Endothelial cell of umbilical vein (primary cell): ENCODE measurements at regions of chr2 and their contacts with region 1.

Region 1: DNA sequence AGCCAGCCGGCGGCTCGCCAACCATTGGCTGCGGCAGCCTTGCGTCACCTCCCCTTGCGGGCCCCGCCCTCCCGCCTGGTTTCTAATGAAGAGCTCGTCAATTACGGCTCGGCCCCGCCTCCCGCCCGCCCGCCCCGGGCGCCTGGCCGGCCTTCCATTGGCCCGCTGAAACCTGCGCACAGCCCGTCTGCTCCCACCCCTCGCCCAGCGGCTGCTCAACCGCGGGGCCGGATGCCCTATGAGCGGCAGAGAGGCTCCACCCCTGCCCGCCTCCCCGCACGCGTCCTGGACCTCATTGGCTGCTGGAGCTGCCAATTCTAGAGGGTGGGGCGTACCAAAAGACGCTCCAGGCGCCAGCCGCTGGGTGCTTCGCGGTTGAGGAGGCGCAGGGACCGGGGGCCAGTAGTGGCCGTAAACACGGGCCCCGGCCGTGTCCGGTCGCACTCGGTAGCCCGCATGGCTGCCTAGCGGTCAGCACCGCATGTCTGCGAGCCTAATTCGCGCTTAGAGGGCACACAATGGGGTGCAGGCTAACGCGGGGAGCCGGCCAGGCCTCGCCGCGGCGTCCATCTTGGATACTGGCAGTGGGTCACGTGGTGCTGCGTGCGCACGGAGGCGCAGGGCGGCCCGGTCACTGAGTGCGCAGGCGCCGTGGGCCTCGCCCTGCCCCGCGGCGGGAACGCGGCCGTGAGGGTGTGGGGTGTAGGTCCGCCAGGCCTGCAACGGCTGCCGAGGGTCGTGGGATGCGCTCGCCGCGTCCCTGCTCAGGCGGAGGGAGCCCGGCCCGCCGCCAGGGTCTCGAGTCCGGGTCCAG is 454 bp upstream of the HDAC4 start:
- DNase-seq: peak; percentile 99
- H3K4me3 ChIP-seq: peak overlapping the region; percentile 67 to 75 (median 71)
- H3K27ac ChIP-seq: peak overlapping the region; percentile 100
- H3K4me1 ChIP-seq: peaks cover 14% of the 10 kb centered on the region
- H3K27me3 ChIP-seq: no peaks in the 10 kb centered on the region
- CTCF ChIP-seq: no peak
- POLR2A ChIP-seq: peak; percentile 97

Region 2: DNA sequence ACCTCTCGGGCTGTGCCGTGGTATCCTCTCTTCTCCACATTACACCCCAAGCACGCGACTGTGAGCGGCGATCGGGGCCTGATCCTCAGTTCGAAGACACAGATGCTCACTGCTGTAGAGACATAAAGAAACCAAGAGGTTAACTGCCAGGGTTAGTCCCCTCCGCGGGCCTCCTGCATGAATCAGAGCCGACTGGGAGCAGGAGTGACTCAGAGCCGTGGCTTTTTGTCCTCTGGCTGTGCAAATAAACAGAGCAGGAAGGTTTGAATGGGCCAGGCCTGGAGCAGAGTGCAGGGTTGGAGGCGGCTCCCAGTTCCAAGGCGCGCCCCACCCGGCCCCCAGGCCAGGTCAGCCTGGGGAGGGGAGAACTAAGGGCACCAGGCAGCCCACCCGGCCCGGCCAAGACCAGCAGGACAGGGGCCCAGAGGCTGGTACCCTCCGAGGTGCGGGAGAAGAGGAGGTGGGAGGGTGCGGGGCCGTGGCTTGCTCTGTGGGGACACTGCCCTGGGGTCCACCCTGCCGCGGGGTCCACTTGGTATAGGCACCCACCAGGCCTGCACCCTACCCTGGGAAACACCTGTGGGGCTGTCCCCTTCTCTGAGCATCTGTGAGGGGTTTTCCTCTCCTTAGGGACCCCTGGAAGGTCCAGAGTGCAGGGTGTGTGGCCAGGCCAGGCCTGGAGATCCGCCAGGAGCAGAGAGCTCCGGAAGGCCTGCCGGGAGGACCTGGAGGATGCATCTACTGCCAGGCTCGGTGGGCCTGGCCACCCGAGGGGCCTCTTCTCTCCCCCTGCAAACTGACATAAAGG is 536.9 kb before region 1 on chr2:
- CTCF ChIA-PET with region 1: no interaction called
- POLR2A ChIA-PET with region 1: no interaction called
- dilution Hi-C with region 1: no loop called
- intact Hi-C with region 1: loop called (anchors 5 kb)
- DNase-seq: peak; percentile 96
- H3K4me3 ChIP-seq: no peak overlapping the region
- H3K27ac ChIP-seq: peak overlapping the region; percentile 92
- H3K4me1 ChIP-seq: peaks cover 19% of the 10 kb centered on the region
- H3K27me3 ChIP-seq: no peaks in the 10 kb centered on the region
- CTCF ChIP-seq: no peak
- POLR2A ChIP-seq: peak; percentile 49

Region 3: DNA sequence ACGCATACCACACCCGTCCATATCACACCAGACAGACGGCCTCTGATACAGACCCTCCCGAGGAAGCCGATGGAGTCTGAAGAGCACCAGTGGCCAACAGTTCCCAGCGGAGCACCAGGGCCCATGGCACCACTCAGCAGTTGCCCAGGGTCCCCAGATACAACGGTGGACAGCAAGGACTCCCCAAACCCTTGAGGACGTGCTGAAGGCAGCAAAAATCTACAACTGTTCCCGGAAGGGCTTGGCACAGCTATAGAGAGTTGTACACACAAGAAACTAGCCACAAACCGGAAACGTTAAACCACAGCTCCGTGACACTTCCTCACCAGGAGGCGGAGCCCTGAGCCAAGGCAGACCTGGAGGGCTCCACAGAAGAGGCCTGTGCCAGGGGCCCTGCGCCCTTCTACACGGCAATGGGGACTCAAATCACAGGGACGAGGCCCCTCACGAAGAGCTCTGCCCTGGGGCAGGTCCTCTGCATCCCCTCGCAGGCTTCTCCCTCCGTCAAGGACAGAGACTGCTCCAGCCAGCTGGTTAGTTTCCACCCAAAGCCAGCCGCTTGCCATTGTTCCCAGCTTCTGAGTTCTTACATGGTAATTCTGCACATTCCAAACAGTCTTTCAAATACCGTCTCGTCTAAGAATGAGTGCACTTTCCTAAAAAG is 133.9 kb before region 1 on chr2:
- CTCF ChIA-PET with region 1: interaction called, 5 read pairs
- POLR2A ChIA-PET with region 1: interaction called, 4 read pairs
- dilution Hi-C with region 1: no loop called
- intact Hi-C with region 1: loop called (anchors 5 kb)
- DNase-seq: peak; percentile 37
- H3K4me3 ChIP-seq: no peak overlapping the region
- H3K27ac ChIP-seq: no peak overlapping the region
- H3K4me1 ChIP-seq: peaks cover 14% of the 10 kb centered on the region
- H3K27me3 ChIP-seq: no peaks in the 10 kb centered on the region
- CTCF ChIP-seq: peak; percentile 6 to 29
- POLR2A ChIP-seq: no peak

Region 4: GRCh38 chr2:239380831-239381708 is 20.2 kb before region 1 on chr2:
- CTCF ChIA-PET with region 1: interaction called, 14 read pairs
- POLR2A ChIA-PET with region 1: interaction called, 4 read pairs
- dilution Hi-C with region 1: no loop called
- intact Hi-C with region 1: loop called (anchors 1 kb)
- DNase-seq: peak; percentile 80
- H3K4me3 ChIP-seq: peak overlapping the region in 2 of 3 experiments; percentile 27 to 31
- H3K27ac ChIP-seq: peak overlapping the region; percentile 19
- H3K4me1 ChIP-seq: peaks cover 15% of the 10 kb centered on the region
- H3K27me3 ChIP-seq: no peaks in the 10 kb centered on the region
- CTCF ChIP-seq: no peak
- POLR2A ChIP-seq: no peak

Region 5: DNA sequence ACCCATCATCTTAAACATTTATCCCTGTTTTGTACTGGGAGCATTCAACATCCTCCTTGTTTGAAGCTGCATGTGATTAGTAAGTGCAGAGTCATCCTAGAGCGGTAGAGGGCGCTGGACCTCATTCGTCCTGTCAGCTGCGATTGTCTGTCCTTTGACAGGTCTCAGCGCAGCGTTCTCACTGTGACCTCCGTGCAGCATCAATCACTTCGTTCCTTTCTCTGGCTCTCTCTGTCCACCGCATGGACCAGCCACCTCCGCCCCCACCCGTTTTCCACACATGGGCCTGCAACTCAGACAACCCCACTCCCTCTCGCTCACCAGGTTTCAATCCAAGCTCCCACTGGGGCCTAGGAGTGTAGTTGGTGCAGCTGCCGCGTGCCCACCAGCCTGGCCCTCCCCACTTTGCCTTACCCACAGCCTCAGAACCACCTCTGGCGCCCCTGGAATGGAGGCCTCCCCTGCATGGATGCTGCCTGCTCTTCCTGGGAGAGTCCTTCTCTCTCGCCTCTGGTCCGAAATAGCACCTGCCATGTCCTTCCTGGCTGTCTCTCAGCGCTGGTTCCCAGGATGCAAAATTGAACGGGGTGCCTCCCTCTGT is 533.4 kb after region 1 on chr2:
- CTCF ChIA-PET with region 1: interaction called, 4 read pairs
- POLR2A ChIA-PET with region 1: no interaction called
- dilution Hi-C with region 1: no loop called
- intact Hi-C with region 1: loop called (anchors 5 kb)
- DNase-seq: peak; percentile 40
- H3K4me3 ChIP-seq: no peak overlapping the region
- H3K27ac ChIP-seq: no peak overlapping the region
- H3K4me1 ChIP-seq: no peaks in the 10 kb centered on the region
- H3K27me3 ChIP-seq: no peaks in the 10 kb centered on the region
- CTCF ChIP-seq: peak; percentile 60 to 70
- POLR2A ChIP-seq: no peak